Mucosa of descending colon (tissue), 3 donors: ENCODE measurements at regions of chr15 and their contacts with region 1.

Region 1: DNA sequence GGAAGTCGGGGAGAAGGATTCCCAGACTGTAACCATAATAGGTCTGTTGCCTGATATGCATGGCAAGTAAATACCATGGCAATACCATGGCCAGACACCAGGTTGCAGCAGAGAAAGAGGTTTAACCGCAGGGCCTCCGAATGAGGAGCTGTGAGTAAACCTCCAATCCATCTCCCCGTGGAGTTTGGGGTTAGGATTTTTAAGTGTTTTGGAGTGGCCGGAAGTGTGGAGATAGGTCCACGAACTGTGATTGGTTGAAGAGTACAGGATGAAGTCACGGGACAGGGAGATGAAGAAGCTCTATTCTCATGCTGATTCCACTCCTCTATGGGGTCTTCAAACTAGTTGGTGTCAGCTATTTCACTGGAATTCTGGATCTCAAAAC is 127.9 kb downstream of the ST8SIA2 start:
- DNase-seq: peak in 2 of 3 donors; percentile 59 to 89
- ATAC-seq: peak; percentile 89
- H3K4me3 ChIP-seq: no peak overlapping the region
- H3K4me1 ChIP-seq: no peaks in the 10 kb centered on the region
- CTCF ChIP-seq: peak; percentile 57

Region 2: GRCh38 chr15:92244703-92245102 is 276.9 kb before region 1 on chr15:
- intact Hi-C with region 1: no loop called
- DNase-seq: no peak
- ATAC-seq: no peak
- H3K4me3 ChIP-seq: no peak overlapping the region
- H3K4me1 ChIP-seq: no peaks in the 10 kb centered on the region
- CTCF ChIP-seq: no peak

Region 3: GRCh38 chr15:92683232-92683834 is 161.7 kb after region 1 on chr15:
- intact Hi-C with region 1: loop called (anchors 10 kb)
- DNase-seq: peak in 1 of 3 donors; percentile 40
- ATAC-seq: peak; percentile 39
- H3K4me3 ChIP-seq: no peak overlapping the region
- H3K4me1 ChIP-seq: no peaks in the 10 kb centered on the region
- CTCF ChIP-seq: no peak

Region 4: GRCh38 chr15:92714477-92715401 is 193.1 kb after region 1 on chr15:
- intact Hi-C with region 1: loop called (anchors 10 kb)
- DNase-seq: peak; percentile 61 to 80 (median 68)
- ATAC-seq: peak; percentile 95
- H3K4me3 ChIP-seq: no peak overlapping the region
- H3K4me1 ChIP-seq: no peaks in the 10 kb centered on the region
- CTCF ChIP-seq: peak; percentile 69